ENCODE measurements at regions of chr10 and their contacts with region 1.

Region 1: GRCh38 chr10:91590142-91590903 is 42.5 kb downstream of the PPP1R3C start:
- DNase-seq: peak; percentile 91 to 92
- ATAC-seq: peak; percentile 80
- H3K4me3 ChIP-seq: no peak overlapping the region
- H3K27ac ChIP-seq: peak overlapping the region; percentile 98
- H3K4me1 ChIP-seq: peaks cover 7 to 35% of the 10 kb centered on the region in 2 donors
- H3K27me3 ChIP-seq: no peaks in the 10 kb centered on the region

Region 2: GRCh38 chr10:91077549-91078071 is 512.7 kb before region 1 on chr10:
- intact Hi-C with region 1: loop called in 1 of 2 experiments (anchors 5 kb)
- DNase-seq: peak; percentile 92 to 94
- ATAC-seq: peak; percentile 79
- H3K4me3 ChIP-seq: no peak overlapping the region
- H3K27ac ChIP-seq: peak overlapping the region; percentile 96 to 100
- H3K4me1 ChIP-seq: peaks cover 13 to 17% of the 10 kb centered on the region in 2 donors
- H3K27me3 ChIP-seq: no peaks in the 10 kb centered on the region

Region 3: GRCh38 chr10:91552274-91553095 is 37.8 kb before region 1 on chr10:
- intact Hi-C with region 1: no loop called
- DNase-seq: no peak
- ATAC-seq: peak; percentile 74
- H3K4me3 ChIP-seq: no peak overlapping the region
- H3K27ac ChIP-seq: no peak overlapping the region
- H3K4me1 ChIP-seq: no peaks in the 10 kb centered on the region
- H3K27me3 ChIP-seq: no peaks in the 10 kb centered on the region

Region 4: GRCh38 chr10:91562839-91563581 is 27.3 kb before region 1 on chr10:
- intact Hi-C with region 1: no loop called
- DNase-seq: no peak
- ATAC-seq: peak; percentile 15
- H3K4me3 ChIP-seq: no peak overlapping the region
- H3K27ac ChIP-seq: peak overlapping the region in 1 of 2 donors; percentile 73
- H3K4me1 ChIP-seq: peaks cover 0 to 2% of the 10 kb centered on the region in 2 donors
- H3K27me3 ChIP-seq: no peaks in the 10 kb centered on the region

Region 5: GRCh38 chr10:91604553-91605534 is 14.5 kb after region 1 on chr10:
- intact Hi-C with region 1: loop called (anchors 2 kb)
- DNase-seq: no peak
- ATAC-seq: peak; percentile 58
- H3K4me3 ChIP-seq: peak overlapping the region in 1 of 2 donors; percentile 5
- H3K27ac ChIP-seq: peak overlapping the region; percentile 79 to 88
- H3K4me1 ChIP-seq: peaks cover 6 to 13% of the 10 kb centered on the region in 2 donors
- H3K27me3 ChIP-seq: no peaks in the 10 kb centered on the region